GM10248 (cell line): ENCODE measurements at regions of chr10 and their contacts with region 1.

Region 1: DNA sequence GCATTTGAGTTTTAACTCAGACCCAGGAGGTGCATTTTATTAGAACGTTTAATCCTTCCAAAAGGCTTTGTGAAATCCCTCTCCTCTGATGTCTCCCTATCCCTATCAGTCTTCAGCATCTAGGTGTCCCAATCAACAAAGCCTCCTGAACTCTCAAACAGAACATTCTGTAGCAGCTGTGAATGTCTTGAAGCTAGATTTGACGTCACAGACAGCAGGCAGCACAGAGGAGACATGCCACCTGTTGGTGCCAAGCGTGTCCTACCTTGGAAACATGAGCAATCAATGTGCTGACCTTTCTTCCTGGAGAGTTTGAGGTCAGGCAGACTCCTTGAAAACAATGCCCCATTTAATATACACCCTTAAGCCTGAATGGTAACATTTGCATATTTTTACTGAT is 125.5 kb downstream of the RNLS start:
- DNase-seq: no peak
- CTCF ChIP-seq: no peak

Region 2: DNA sequence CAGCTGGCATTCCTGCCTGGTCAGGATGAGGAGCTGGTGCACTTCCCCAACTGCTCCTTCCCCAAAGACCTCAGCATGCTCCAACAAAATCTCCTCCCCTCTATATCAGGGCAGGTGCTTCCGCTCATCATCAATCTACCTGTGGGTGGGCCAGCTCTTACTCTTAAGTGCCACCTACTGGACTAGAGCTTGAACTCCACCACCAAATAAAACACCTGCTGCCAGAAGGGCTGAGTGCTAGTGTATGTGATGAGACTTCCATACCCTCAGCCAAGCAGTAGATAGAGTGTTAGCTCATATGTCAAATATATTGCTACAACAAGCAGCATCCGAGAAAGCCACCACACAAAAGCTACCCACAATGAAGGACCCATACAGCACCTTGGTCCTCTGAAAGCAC is 138.9 kb before region 1 on chr10:
- CTCF ChIA-PET with region 1: no interaction called
- POLR2A ChIA-PET with region 1: no interaction called
- DNase-seq: no peak
- CTCF ChIP-seq: no peak

Region 3: GRCh38 chr10:88478256-88478655 is 20.6 kb after region 1 on chr10:
- CTCF ChIA-PET with region 1: interaction called, 17 read pairs
- POLR2A ChIA-PET with region 1: no interaction called
- DNase-seq: no peak
- CTCF ChIP-seq: no peak